ENCODE measurements at regions of chr14 and their contacts with region 1.

Region 1: DNA sequence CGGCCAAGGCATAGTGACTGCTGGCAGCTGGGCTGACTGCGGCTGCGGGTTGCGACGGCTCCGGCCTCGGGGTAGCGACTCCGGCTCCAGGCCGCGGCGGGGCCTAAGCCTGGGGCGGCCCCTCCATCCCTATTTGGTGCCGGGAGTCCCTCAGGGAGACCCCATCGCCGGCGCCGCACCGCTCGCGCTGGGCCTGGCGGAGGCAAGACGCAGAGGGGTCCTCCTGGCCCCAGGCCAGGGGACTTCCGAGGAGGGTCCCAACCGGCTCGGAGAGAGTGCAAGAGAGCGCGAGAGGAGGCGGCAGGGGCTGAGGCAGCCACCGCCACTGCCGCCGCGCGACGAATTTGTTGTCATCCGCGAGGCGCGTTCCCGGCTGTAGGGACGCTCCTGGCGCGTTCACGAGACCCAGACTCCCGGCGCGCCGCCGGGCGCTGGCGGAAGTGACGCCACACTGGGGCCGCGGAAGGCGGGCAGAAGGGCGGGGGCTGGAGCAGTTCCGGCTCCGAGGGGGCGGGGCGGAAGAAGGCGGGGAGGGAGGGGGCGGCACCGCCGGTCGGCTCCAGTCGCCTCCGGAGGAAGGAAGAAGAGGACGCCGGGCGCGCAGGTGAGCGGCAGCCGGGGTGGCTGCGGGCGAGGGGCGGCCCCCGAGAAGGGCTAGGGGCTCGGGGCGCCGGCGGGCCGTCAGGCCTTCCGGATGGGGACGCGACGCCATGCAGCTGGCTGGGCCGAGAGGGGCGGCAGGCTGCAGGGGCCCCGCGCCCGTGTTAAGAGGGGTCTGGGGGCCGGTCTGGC is at the starts of genes ATG2B and GSKIP:
- DNase-seq: peak; percentile 89
- H3K4me3 Mint-ChIP-seq: peak within 1 kb of the TSS; percentile 95
- H3K27ac Mint-ChIP-seq: peak within 1 kb of the TSS; percentile 69
- H3K4me1 Mint-ChIP-seq: peaks cover 28% of the 10 kb centered on the region
- H3K27me3 Mint-ChIP-seq: no peaks in the 10 kb centered on the region
- CTCF ChIP-seq: no peak
- total RNA-seq, gene ATG2B: 20.5 and 22.2 TPM in 2 replicates
- total RNA-seq, gene GSKIP: 19.8 and 22.5 TPM in 2 replicates

Region 2: GRCh38 chr14:96281486-96281885 is 81.7 kb before region 1 on chr14:
- CTCF ChIA-PET with region 1: no interaction called
- POLR2A ChIA-PET with region 1: no interaction called
- intact Hi-C with region 1: no loop called
- DNase-seq: no peak
- H3K4me3 Mint-ChIP-seq: no peak overlapping the region
- H3K27ac Mint-ChIP-seq: no peak overlapping the region
- H3K4me1 Mint-ChIP-seq: no peaks in the 10 kb centered on the region
- H3K27me3 Mint-ChIP-seq: no peaks in the 10 kb centered on the region
- CTCF ChIP-seq: no peak

Region 3: GRCh38 chr14:96380735-96381134 is 17.6 kb after region 1 on chr14:
- CTCF ChIA-PET with region 1: no interaction called
- POLR2A ChIA-PET with region 1: interaction called, 16 read pairs
- intact Hi-C with region 1: no loop called
- DNase-seq: no peak
- H3K4me3 Mint-ChIP-seq: no peak overlapping the region
- H3K27ac Mint-ChIP-seq: no peak overlapping the region
- H3K4me1 Mint-ChIP-seq: peaks cover 8% of the 10 kb centered on the region
- H3K27me3 Mint-ChIP-seq: no peaks in the 10 kb centered on the region
- CTCF ChIP-seq: no peak